ENCODE measurements at regions of chr7 and their contacts with region 1.

Region 1: DNA sequence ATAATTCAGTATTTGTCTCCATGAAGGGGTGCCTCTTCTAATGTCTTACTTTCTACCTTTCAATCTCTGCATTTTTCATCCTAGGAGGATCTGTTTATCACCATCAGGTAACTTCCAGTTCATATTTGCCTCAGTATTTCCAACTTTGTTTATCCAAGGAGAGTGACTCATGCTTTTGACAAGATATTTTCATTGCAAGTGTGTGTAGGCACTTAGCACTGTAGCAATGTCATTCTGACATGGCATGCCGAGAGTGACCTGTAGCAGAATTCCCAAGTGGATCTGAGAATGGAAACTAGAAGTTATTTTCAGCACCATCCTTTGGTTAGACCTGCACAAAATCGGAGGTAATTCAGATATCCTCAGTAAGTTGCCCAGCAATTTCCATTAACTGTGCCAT is 129.9 kb downstream of the INHBA start:
- DNase-seq: no peak

Region 2: GRCh38 chr7:42964849-42965805 is 1392.1 kb after region 1 on chr7:
- intact Hi-C with region 1: loop called in 1 of 2 experiments (anchors 5 kb)
- DNase-seq: no peak

Measured in posterior vena cava (tissue), 2 donors.